HepG2 (cell line): ENCODE measurements at regions of chr15 and their contacts with region 1.

Region 1: DNA sequence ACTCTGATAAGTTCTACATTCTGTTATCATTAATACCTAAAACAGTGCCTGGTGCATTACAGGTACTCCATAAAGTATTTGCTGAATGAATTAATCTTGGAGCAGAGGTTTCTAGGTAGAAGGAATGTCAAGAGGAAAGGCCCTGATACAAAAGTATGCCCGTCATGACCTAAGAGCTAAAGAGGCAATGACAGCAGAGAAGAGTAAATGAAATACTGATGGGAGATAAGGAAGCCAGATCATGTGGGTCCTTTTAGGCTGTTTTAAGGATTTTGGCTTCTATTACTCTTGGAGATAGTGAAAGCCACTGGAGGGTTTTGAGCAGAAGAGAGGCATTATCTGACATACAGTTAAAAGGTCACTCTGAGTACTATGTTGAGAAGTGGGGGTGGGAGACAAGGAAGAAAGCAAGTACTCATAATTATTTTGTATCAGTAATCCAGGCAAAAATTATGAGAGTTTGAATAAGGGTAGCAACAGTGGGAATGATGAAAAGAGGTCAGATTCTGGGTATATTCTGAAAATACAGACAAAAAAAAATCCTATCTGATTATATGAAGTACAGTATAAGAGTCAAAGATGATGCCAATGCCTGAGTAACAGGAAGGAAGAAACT is 48.3 kb downstream of the DENND4A start:
- DNase-seq: no peak
- ATAC-seq: no peak
- H3K4me3 ChIP-seq: no peak overlapping the region
- H3K27ac ChIP-seq: peak overlapping the region; percentile 12
- H3K4me1 ChIP-seq: peaks cover 44% of the 10 kb centered on the region
- H3K27me3 ChIP-seq: no peaks in the 10 kb centered on the region
- CTCF ChIP-seq: no peak
- EP300 ChIP-seq: no peak
- POLR2A ChIP-seq: no peak
- RAD21 ChIP-seq: no peak

Region 2: GRCh38 chr15:65723876-65724275 is 19.9 kb before region 1 on chr15:
- CTCF ChIA-PET with region 1: no interaction called
- POLR2A ChIA-PET with region 1: no interaction called
- in situ Hi-C with region 1: no loop called
- intact Hi-C with region 1: no loop called
- DNase-seq: no peak
- ATAC-seq: no peak
- H3K4me3 ChIP-seq: no peak overlapping the region
- H3K27ac ChIP-seq: no peak overlapping the region
- H3K4me1 ChIP-seq: peaks cover 17% of the 10 kb centered on the region
- H3K27me3 ChIP-seq: no peaks in the 10 kb centered on the region
- CTCF ChIP-seq: no peak
- EP300 ChIP-seq: no peak
- POLR2A ChIP-seq: no peak
- RAD21 ChIP-seq: no peak

Region 3: DNA sequence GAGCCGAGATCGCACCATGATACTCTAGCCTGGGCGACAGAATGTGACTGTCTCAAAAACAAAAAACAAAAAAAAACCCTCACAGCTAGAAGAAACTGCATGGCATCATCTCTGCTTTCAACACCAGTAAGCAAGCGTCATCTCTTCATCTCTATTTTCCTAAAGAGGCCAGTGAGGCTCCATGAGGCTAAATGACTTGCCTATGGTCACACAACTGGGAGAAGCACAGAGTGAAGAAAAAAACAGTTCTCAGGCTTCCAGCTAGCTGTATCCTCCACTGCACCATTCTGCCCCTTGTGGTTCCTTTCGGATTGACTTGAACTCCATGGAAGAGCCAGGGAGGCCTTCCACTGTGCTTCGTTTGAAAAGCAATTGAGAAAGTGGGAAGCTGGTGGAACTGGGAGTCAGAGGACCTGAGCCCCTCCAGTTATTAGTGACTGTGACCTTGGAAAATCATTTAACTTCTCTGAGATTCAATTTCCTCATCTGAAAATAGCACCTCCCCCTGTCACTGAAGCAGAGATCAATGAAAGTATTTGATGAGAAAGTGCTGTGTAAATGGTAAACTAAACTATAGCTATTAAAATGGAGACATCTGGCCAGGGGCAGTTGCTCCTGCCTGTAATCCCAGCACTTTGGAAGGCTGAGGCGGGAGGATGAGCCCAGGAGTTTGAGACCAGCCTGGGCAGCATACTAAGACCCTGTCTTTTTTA is 80.4 kb after region 1 on chr15:
- CTCF ChIA-PET with region 1: no interaction called
- POLR2A ChIA-PET with region 1: no interaction called
- in situ Hi-C with region 1: no loop called
- intact Hi-C with region 1: loop called (anchors 5 kb)
- DNase-seq: peak; percentile 81
- ATAC-seq: peak; percentile 99
- H3K4me3 ChIP-seq: peak overlapping the region in 1 of 3 experiments; percentile 9; a peak in 1 of 6 replicates
- H3K27ac ChIP-seq: peak overlapping the region; percentile 52
- H3K4me1 ChIP-seq: peaks cover 55% of the 10 kb centered on the region
- H3K27me3 ChIP-seq: no peaks in the 10 kb centered on the region
- CTCF ChIP-seq: peak; percentile 83
- EP300 ChIP-seq: no peak
- POLR2A ChIP-seq: no peak
- RAD21 ChIP-seq: peak; percentile 66